ENCODE measurements at regions of chr5 and their contacts with region 1.

Region 1: DNA sequence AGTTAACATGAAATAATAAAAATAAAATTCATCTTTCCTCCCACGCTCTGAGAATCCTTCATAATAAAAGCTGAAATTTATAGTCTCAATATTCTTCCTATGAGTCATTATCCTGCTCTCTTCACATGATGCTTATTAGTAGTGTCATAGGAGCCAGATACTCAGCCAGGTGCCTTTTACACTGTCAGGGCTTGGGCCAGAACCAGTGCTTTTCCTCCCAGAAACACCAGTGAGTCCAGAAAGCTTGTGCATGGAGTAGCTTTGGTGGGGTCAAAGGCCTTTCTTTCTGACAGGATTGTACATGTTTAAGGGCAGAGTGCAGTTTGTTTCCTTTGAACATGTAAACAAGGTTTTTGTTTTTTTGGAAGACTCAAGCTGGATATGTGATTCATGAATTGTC is 6.8 kb downstream of the LSM11 start:
- DNase-seq: no peak
- ATAC-seq: no peak
- H3K4me3 ChIP-seq: no peak overlapping the region
- H3K27ac ChIP-seq: no peak overlapping the region
- H3K4me1 ChIP-seq: no peaks in the 10 kb centered on the region
- H3K27me3 ChIP-seq: no peaks in the 10 kb centered on the region
- CTCF ChIP-seq: no peak

Region 2: GRCh38 chr5:157649091-157649490 is 101.2 kb before region 1 on chr5:
- CTCF ChIA-PET with region 1: interaction called, 13 read pairs
- POLR2A ChIA-PET with region 1: no interaction called
- in situ Hi-C with region 1: no loop called
- intact Hi-C with region 1: no loop called
- DNase-seq: no peak
- ATAC-seq: no peak
- H3K4me3 ChIP-seq: no peak overlapping the region
- H3K27ac ChIP-seq: no peak overlapping the region
- H3K4me1 ChIP-seq: no peaks in the 10 kb centered on the region
- H3K27me3 ChIP-seq: no peaks in the 10 kb centered on the region
- CTCF ChIP-seq: no peak

Region 3: DNA sequence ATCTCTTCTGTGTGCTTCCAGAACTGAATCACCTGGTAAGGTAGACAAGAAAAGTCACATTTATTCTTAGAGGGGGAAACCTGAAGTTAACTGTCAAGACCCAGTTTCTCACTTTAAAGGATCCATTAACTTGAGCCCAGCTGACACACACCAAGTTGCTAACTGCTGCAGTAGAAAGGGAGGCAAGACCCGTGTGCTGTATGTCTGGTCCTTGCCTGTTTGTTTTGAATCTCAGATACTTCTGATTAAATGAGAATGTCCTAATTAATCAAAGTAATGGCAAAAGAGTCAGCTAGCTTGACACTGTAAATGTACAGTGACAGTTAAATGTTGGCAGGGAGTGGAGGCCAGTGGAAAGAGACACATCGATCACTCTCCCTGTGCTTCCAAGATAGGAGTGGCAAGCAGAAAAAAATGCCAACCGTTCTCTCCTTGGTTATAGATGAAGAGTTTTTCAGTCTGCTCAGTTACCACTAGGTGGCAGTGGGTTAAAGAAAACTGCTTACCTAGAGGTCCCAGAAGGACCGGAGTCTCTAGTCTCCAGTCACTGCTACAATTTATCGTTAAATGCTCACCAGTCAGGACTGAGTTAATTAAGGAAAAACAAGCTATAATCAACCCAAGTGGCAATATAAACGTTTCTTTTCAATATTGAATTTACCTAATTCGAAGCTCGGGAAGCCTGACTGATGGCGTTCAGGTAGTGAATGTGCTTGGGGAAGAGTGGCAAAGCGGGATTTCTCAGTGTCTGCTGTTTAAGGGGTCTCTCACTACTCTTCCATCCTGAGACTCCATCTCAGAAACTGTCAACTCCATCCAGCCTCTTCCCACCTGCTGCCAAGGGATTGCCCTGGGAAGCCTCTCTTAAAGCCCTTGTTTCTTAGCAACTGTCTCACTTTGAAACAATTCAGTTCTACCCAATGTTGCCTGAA is 11.6 kb after region 1 on chr5:
- CTCF ChIA-PET with region 1: no interaction called
- POLR2A ChIA-PET with region 1: no interaction called
- in situ Hi-C with region 1: no loop called
- intact Hi-C with region 1: no loop called
- DNase-seq: peak; percentile 35
- ATAC-seq: peak; percentile 97
- H3K4me3 ChIP-seq: no peak overlapping the region
- H3K27ac ChIP-seq: no peak overlapping the region
- H3K4me1 ChIP-seq: no peaks in the 10 kb centered on the region; the same call in 1 of the 2 replicates
- H3K27me3 ChIP-seq: no peaks in the 10 kb centered on the region
- CTCF ChIP-seq: peak; percentile 87

Measured in Panc1 (cell line).